Activated CD4-positive, alpha-beta T cell treated with anti-CD3 and anti-CD28 coated beads for 36 hours (primary cell): ENCODE measurements at regions of chr9 and their contacts with region 1.

Region 1: DNA sequence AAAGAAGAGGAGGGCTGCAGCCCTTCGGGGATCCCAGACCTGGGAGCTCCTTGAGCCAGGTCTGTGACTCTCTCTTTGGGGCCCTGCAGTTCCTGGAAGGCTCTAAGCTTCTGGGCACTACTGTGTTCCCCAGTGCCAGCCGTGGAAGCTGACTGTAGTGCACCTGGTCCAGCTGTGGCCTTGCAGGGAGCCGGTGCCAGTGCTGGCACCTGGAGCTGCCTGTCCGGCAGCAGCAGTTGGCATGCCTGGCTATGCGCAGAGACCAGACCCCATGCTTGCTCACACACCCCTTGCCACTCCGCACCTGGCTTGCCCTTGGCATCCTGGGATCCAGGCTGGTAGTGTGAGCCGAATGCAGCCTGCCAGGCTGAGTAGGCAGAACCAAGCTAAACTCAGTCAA is 91.0 kb upstream of the PUM3 start:
- DNase-seq: no peak
- ATAC-seq: no peak
- H3K4me3 Mint-ChIP-seq: no peak overlapping the region
- H3K27ac Mint-ChIP-seq: no peak overlapping the region
- H3K4me1 Mint-ChIP-seq: no peaks in the 10 kb centered on the region
- H3K27me3 Mint-ChIP-seq: peaks cover 12% of the 10 kb centered on the region

Region 2: DNA sequence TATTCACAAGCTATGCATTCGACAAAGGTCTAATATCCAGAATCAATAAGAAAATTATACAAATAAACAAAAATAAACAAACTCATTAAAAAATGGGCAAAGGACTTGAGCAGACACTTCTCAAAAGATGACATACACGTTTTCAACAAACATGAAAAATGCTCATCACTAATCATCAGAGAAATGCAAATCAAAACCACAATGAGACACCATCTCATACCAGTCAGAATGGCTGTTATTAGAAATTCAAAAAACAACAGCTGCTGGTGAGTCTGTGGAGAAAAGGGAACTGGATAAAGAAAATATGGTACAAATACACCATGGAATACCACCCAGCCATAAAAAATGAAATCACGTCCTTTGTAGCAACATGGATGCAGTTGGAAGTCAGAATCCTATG is 45.9 kb before region 1 on chr9:
- CTCF ChIA-PET with region 1: interaction called, 3 read pairs
- POLR2A ChIA-PET with region 1: no interaction called
- intact Hi-C with region 1: loop called in 1 of 2 experiments (anchors 10 kb)
- DNase-seq: no peak
- ATAC-seq: no peak
- H3K4me3 Mint-ChIP-seq: no peak overlapping the region
- H3K27ac Mint-ChIP-seq: no peak overlapping the region
- H3K4me1 Mint-ChIP-seq: no peaks in the 10 kb centered on the region
- H3K27me3 Mint-ChIP-seq: peaks cover 21% of the 10 kb centered on the region